Calu3 (cell line): ENCODE measurements at regions of chr7 and their contacts with region 1.

Region 1: GRCh38 chr7:28626624-28627262 is 214.4 kb downstream of the CREB5 start:
- DNase-seq: peak; percentile 72
- H3K4me3 Mint-ChIP-seq: no peak overlapping the region
- H3K27ac Mint-ChIP-seq: no peak overlapping the region
- H3K4me1 Mint-ChIP-seq: peaks cover 50% of the 10 kb centered on the region
- H3K27me3 Mint-ChIP-seq: no peaks in the 10 kb centered on the region
- CTCF ChIP-seq: peak; percentile 91

Region 2: DNA sequence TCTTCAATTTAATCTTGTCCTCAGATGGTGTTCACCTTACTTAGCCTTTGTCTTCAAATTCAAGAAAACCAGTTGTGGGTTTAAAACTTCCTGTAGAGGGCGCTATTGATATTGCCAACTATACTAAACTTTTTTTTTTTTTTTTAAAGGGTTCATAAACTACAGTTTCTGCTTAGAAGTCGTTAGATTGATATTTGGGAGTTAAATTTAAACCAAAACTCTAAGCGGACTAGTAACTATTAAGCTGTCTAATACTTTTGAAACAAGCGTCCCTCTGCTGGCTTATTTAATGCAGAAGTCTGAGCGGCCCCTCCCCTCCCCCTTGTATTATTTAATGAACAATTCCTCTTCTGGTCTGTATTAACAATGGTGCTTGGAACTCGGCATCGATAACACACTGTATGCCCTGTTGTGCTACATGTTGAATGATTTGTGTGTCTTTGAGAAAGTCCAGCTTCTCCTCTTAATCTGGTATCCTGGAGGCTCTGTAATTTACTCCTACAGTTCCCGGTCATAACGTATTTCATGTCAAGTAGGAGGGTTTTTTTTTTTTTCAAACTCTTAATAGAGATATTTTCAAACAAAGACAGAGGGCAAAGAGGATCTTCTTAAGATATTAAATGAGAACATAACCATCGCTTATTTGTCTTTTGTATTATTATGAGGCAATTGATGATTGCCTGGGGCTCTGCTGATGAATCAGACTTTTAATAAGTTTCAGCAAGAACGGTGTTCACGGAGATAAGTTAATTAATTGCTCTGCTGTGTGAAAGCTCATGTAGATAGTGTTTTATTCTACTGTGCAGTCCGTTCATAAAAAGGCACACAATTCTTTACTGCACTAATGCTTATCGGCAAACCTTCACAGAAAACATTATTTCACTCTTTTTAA is 237.0 kb before region 1 on chr7:
- CTCF ChIA-PET with region 1: interaction called, 4 read pairs
- intact Hi-C with region 1: loop called (anchors 1 kb)
- DNase-seq: peak; percentile 39
- H3K4me3 Mint-ChIP-seq: peak overlapping the region; percentile 70
- H3K27ac Mint-ChIP-seq: peak overlapping the region; percentile 46
- H3K4me1 Mint-ChIP-seq: peaks cover 15% of the 10 kb centered on the region
- H3K27me3 Mint-ChIP-seq: no peaks in the 10 kb centered on the region
- CTCF ChIP-seq: peak; percentile 77

Region 3: GRCh38 chr7:28423918-28424514 is 202.7 kb before region 1 on chr7:
- CTCF ChIA-PET with region 1: no interaction called
- intact Hi-C with region 1: no loop called
- DNase-seq: no peak
- H3K4me3 Mint-ChIP-seq: no peak overlapping the region
- H3K27ac Mint-ChIP-seq: no peak overlapping the region
- H3K4me1 Mint-ChIP-seq: no peaks in the 10 kb centered on the region
- H3K27me3 Mint-ChIP-seq: no peaks in the 10 kb centered on the region
- CTCF ChIP-seq: no peak

Region 4: GRCh38 chr7:28509251-28510022 is 117.3 kb before region 1 on chr7:
- CTCF ChIA-PET with region 1: no interaction called
- intact Hi-C with region 1: loop called (anchors 5 kb)
- DNase-seq: no peak
- H3K4me3 Mint-ChIP-seq: no peak overlapping the region
- H3K27ac Mint-ChIP-seq: no peak overlapping the region
- H3K4me1 Mint-ChIP-seq: no peaks in the 10 kb centered on the region
- H3K27me3 Mint-ChIP-seq: no peaks in the 10 kb centered on the region
- CTCF ChIP-seq: no peak

Region 5: DNA sequence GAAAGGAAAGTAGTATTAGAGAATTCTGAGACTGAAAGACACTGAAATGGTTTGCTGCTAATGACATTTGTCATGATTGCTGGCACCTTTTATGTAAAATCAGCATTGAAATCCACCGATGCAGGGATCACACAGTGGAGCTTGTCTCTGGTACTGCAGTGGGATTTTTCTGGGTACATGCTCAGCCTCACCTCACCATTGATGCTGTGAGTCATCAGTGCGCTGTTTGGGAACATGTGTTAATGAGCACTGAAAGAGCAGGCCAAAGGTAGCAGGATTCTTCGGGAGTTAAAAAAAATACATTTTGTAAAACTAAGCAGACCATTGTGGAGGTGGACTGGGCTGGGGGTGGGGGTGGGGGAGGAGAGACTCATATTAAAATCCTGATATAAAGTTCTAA is 39.5 kb before region 1 on chr7:
- CTCF ChIA-PET with region 1: interaction called, 3 read pairs
- intact Hi-C with region 1: loop called (anchors 1 kb)
- DNase-seq: peak; percentile 56
- H3K4me3 Mint-ChIP-seq: no peak overlapping the region
- H3K27ac Mint-ChIP-seq: peak overlapping the region; percentile 19
- H3K4me1 Mint-ChIP-seq: peaks cover 20% of the 10 kb centered on the region
- H3K27me3 Mint-ChIP-seq: peaks cover 14% of the 10 kb centered on the region
- CTCF ChIP-seq: no peak

Region 6: DNA sequence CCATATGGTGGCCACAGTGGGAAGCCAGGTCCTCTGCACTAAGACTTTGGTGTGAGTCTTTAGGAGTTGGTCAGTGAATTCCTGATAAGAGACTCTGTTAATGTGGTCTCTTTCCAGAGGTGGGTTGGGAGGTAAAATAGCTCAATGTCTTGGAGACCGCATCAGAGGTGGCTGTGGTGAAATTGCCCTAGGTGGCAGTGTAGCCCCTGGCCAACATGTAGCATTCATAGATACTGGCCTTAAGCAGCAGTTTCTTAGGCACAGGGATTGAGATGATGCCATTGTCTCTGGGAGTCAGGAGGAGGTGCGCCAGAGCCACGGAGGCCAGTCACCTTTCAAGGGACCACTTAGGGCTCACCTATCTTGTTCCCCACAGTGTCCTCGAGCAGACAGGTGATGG is 11.7 kb before region 1 on chr7:
- CTCF ChIA-PET with region 1: interaction called, 23 read pairs
- intact Hi-C with region 1: loop called (anchors 1 kb)
- DNase-seq: no peak
- H3K4me3 Mint-ChIP-seq: no peak overlapping the region
- H3K27ac Mint-ChIP-seq: no peak overlapping the region
- H3K4me1 Mint-ChIP-seq: peaks cover 60% of the 10 kb centered on the region
- H3K27me3 Mint-ChIP-seq: no peaks in the 10 kb centered on the region
- CTCF ChIP-seq: peak; percentile 19